Tibial artery (tissue), 4 donors: ENCODE measurements at regions of chr5 and their contacts with region 1.

Region 1: GRCh38 chr5:149561848-149562247 is 10.6 kb upstream of the CSNK1A1 start:
- DNase-seq: no peak
- H3K4me3 ChIP-seq: no peak overlapping the region
- H3K27ac ChIP-seq: peak overlapping the region; percentile 47 to 59
- H3K4me1 ChIP-seq: peaks cover 0 to 36% (median 28%) of the 10 kb centered on the region in 4 donors
- H3K27me3 ChIP-seq: no peaks in the 10 kb centered on the region
- CTCF ChIP-seq: no peak

Region 2: GRCh38 chr5:149317281-149318048 is 244.4 kb before region 1 on chr5:
- intact Hi-C with region 1: loop called (anchors 5 kb)
- DNase-seq: no peak
- H3K4me3 ChIP-seq: no peak overlapping the region
- H3K27ac ChIP-seq: no peak overlapping the region
- H3K4me1 ChIP-seq: peaks cover 0 to 10% (median 3%) of the 10 kb centered on the region in 4 donors
- H3K27me3 ChIP-seq: no peaks in the 10 kb centered on the region
- CTCF ChIP-seq: peak; percentile 66 to 70

Region 3: GRCh38 chr5:149367249-149367971 is 194.4 kb before region 1 on chr5:
- intact Hi-C with region 1: loop called (anchors 5 kb)
- DNase-seq: peak in 1 of 2 donors; percentile 84
- H3K4me3 ChIP-seq: no peak overlapping the region
- H3K27ac ChIP-seq: peak overlapping the region; percentile 43 to 56
- H3K4me1 ChIP-seq: peaks cover 0 to 38% (median 25%) of the 10 kb centered on the region in 4 donors
- H3K27me3 ChIP-seq: no peaks in the 10 kb centered on the region
- CTCF ChIP-seq: peak; percentile 85 to 87

Region 4: GRCh38 chr5:149442563-149443182 is 119.2 kb before region 1 on chr5:
- intact Hi-C with region 1: loop called (anchors 5 kb)
- DNase-seq: peak; percentile 71 to 86
- H3K4me3 ChIP-seq: no peak overlapping the region
- H3K27ac ChIP-seq: peak overlapping the region; percentile 50 to 64
- H3K4me1 ChIP-seq: peaks cover 4 to 33% (median 19%) of the 10 kb centered on the region in 4 donors
- H3K27me3 ChIP-seq: no peaks in the 10 kb centered on the region
- CTCF ChIP-seq: peak; percentile 90 to 96

Region 5: GRCh38 chr5:149605998-149606724 is 44.3 kb after region 1 on chr5:
- intact Hi-C with region 1: no loop called
- DNase-seq: peak in 1 of 2 donors; percentile 46
- H3K4me3 ChIP-seq: no peak overlapping the region
- H3K27ac ChIP-seq: no peak overlapping the region
- H3K4me1 ChIP-seq: peaks cover 0 to 10% (median 4%) of the 10 kb centered on the region in 4 donors
- H3K27me3 ChIP-seq: no peaks in the 10 kb centered on the region
- CTCF ChIP-seq: no peak